ENCODE measurements at regions of chr19 and their contacts with region 1.

Region 1: DNA sequence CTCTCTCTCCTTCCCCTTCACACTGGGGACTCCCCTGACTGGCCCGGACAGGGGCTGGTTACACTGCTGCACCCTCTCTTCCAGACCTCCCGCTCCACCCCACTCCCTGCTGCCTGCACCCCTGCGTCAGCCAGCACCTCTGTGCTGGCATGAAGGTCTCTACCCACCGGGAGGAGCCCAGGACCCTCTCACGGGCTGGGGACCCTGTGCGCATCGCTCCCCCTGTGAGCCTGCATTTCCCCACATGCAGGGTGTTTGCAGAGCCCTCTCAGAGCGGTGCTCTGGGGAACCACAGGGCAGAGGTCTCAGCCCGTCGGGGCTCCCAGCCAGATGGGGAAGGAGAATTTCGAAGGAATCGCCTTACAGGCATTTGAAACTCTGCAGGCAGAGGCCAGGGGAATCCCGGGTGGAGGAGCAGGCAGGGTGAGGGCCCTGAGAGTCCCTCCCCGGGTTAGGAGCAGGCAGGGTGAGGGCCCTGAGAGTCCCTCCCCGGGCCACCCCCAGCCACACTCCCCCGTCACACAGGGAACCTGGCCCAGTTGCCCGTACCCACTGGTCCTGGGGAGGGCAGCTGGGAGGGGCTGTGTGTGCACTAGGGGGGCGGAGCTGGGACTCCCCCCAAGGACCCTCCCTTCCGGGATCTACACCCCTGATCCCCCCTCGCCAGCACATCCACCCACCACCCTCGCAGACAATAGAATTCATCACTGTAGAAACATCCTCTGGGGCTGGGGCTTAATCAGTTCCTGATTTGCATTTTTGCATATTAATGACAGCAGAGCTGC is 16.3 kb upstream of the TCF3 start:
- DNase-seq: no peak
- ATAC-seq: no peak
- H3K4me3 ChIP-seq: no peak overlapping the region
- H3K27ac ChIP-seq: no peak overlapping the region
- H3K4me1 ChIP-seq: peaks cover 21% of the 10 kb centered on the region
- H3K27me3 ChIP-seq: peaks cover 0 to 24% of the 10 kb centered on the region in 2 donors
- CTCF ChIP-seq: no peak
- POLR2A ChIP-seq: no peak

Region 2: DNA sequence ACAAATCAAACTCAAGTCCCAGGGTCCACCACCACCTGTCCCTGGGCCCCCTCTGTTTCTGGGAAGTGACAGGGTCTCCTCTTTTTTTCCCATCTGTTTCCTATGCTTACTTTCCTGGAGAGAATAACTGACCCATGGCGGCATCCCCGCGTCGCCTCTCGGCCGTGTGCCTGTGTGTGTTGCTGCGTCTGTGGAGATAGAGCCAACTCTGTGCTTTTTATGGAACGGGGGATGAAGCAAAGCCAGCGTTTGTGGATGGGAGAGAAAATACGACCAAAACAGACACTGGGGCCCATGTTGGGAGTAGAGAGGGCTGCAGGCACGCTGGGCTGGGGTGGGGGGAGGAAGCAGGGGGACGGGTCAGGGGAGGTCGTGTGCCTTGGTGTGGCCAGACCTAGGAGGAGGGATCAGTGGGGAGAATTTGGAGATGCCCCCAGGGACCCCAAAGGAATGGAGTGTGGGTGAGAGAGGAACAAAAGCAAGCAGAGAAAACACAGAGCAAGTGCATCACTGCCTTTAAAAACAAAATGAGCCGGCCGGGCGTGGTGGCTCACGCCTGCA is 128.2 kb before region 1 on chr19:
- intact Hi-C with region 1: loop called (anchors 10 kb)
- DNase-seq: no peak
- ATAC-seq: no peak
- H3K4me3 ChIP-seq: no peak overlapping the region
- H3K27ac ChIP-seq: no peak overlapping the region
- H3K4me1 ChIP-seq: no peaks in the 10 kb centered on the region
- H3K27me3 ChIP-seq: peaks cover 0 to 7% of the 10 kb centered on the region in 2 donors
- CTCF ChIP-seq: no peak
- POLR2A ChIP-seq: no peak

Region 3: DNA sequence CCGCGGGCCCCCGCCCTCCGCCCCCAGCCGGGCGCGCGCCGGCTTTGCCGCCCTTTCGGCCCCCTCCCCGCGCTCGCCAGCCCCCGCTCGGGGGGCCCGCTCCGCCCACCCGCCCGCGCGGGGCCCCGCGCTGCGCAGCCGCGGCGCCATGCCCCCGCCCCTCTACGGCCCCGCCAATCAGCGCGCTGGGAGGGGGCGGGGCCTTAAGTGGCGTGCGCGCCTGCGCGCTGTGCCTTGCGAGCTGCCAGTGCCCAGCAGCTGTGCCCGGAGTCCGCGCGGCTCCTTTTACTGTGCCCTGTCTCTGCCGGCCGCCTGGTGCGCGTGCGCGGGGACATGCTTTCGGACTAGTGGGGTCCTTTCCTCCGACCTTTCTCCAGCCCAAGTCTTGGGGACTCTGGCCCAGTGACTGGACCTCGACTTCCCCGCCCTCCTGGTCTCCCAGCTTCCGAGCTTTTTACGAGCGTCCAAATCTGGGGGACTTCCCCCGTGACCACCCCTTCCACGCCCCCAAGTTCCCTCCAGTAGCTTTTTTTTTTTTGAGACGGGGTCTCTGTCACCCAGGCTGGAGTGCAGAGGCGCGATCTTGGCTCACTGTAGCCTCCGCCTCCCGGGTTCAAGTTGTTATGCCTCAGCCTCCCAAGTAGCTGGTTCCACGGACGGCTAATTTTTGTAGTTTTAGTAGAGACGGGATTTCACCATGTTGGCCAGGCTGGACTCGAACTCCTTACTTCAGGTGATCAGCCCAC is 75.8 kb before region 1 on chr19 and contains the start of gene MBD3:
- intact Hi-C with region 1: no loop called
- DNase-seq: peak; percentile 95 to 97 (median 96)
- ATAC-seq: peak; percentile 92
- H3K4me3 ChIP-seq: peak within 1 kb of the TSS; percentile 66 to 96
- H3K27ac ChIP-seq: peak within 1 kb of the TSS; percentile 92 to 98 (median 93)
- H3K4me1 ChIP-seq: peaks cover 29% of the 10 kb centered on the region
- H3K27me3 ChIP-seq: no peaks in the 10 kb centered on the region
- CTCF ChIP-seq: peak in 4 of 7 experiments; percentile 40 to 51 (median 44)
- POLR2A ChIP-seq: peak; percentile 28 to 69 (median 66)
- total RNA-seq, gene MBD3: 37.4 to 91.6 TPM

Region 4: GRCh38 chr19:1608359-1609102 is 60.1 kb before region 1 on chr19:
- intact Hi-C with region 1: no loop called
- DNase-seq: no peak
- ATAC-seq: no peak
- H3K4me3 ChIP-seq: no peak overlapping the region
- H3K27ac ChIP-seq: no peak overlapping the region
- H3K4me1 ChIP-seq: peaks cover 21% of the 10 kb centered on the region
- H3K27me3 ChIP-seq: no peaks in the 10 kb centered on the region
- CTCF ChIP-seq: no peak
- POLR2A ChIP-seq: no peak

Region 5: DNA sequence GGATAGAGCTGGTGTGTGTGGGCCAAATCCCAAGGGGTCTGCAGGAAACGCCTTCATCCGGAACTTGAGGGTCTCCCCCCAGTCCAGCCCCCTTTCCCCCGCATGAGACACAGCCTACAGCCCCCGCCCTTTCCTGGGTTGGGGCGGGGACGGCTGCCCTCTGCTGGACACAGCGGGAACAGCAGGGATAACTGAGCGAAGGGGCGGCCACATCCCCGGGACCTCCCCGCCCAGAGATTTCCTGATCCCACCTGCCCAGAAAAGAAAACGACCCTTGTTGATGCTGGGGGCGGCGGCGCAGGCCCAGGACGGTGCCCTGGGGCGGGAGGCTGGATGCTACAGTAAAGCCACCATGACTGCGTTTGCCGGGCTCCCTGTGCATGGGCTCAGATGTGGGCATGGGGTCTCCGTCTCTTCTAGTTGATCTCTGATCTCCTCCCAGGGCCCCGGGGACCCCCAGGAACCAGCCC is 98.8 kb after region 1 on chr19:
- intact Hi-C with region 1: loop called (anchors 2 kb)
- DNase-seq: peak; percentile 13 to 55 (median 40)
- ATAC-seq: peak; percentile 68
- H3K4me3 ChIP-seq: no peak overlapping the region
- H3K27ac ChIP-seq: no peak overlapping the region
- H3K4me1 ChIP-seq: no peaks in the 10 kb centered on the region
- H3K27me3 ChIP-seq: peaks cover 0 to 63% of the 10 kb centered on the region in 2 donors
- CTCF ChIP-seq: peak; percentile 81 to 98 (median 91)
- POLR2A ChIP-seq: no peak

Measured in body of pancreas (tissue), 4 donors.